Esophagus muscularis mucosa (tissue), 4 donors: ENCODE measurements at regions of chr19 and their contacts with region 1.

Region 1: DNA sequence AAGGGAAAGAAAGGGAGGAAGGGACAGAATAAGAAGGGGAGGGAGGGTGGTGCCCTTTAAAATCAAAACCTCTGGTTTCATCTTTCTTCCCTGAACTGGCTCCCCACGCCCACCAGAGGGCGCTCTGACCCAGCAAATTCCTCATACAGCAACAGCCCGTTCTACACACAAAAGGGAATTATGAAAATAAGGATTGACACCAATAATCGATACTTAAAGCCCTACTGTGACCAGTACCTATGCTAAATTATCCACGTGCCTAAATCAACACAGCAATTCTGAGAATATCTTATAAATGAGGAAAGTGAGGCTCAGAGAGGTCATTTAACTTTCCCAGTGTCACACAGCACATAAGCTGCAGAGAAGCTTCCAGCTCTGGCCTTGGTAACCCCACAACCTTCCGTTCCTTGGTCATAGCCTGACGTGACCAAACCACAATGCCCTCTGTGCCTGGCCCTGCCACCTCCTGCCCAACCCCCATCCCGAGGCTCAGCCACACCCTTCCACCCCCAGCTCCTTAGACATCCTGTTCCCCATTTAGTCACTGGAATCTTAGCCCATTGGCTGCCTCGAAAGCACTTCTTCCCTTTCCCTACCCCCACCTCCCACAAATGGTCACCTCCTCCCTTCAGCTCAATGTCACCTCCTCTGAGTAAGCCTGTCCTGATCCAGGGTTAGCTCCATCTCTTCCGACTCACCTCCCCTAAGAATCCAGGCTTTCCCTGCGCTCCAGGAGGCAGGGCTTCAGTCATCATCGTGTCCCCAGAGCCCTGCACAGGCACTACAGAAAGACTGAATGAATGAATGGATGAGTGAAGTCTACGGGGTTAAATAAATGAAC is 34.2 kb upstream of the PNMA8B start:
- DNase-seq: no peak
- H3K4me3 ChIP-seq: no peak overlapping the region
- H3K27ac ChIP-seq: no peak overlapping the region
- H3K4me1 ChIP-seq: peaks cover 0 to 15% (median 14%) of the 10 kb centered on the region in 4 donors
- H3K27me3 ChIP-seq: peaks cover 0 to 38% (median 4%) of the 10 kb centered on the region in 4 donors
- CTCF ChIP-seq: peak; percentile 91 to 94 (median 92)
- EP300 ChIP-seq: no peak
- POLR2A ChIP-seq: no peak

Region 2: GRCh38 chr19:46404055-46404752 is 125.6 kb before region 1 on chr19:
- intact Hi-C with region 1: no loop called
- DNase-seq: no peak
- H3K4me3 ChIP-seq: peak overlapping the region; percentile 36 to 50 (median 42)
- H3K27ac ChIP-seq: peak overlapping the region; percentile 41 to 66 (median 53)
- H3K4me1 ChIP-seq: peaks cover 12 to 48% (median 38%) of the 10 kb centered on the region in 4 donors
- H3K27me3 ChIP-seq: peaks cover 2 to 94% (median 29%) of the 10 kb centered on the region in 4 donors
- CTCF ChIP-seq: no peak
- EP300 ChIP-seq: no peak
- POLR2A ChIP-seq: no peak

Region 3: GRCh38 chr19:46542428-46543230 is 12.8 kb after region 1 on chr19:
- intact Hi-C with region 1: loop called (anchors 2 kb)
- DNase-seq: peak; percentile 99
- H3K4me3 ChIP-seq: no peak overlapping the region
- H3K27ac ChIP-seq: no peak overlapping the region
- H3K4me1 ChIP-seq: peaks cover 0 to 7% (median 0%) of the 10 kb centered on the region in 4 donors
- H3K27me3 ChIP-seq: no peaks in the 10 kb centered on the region
- CTCF ChIP-seq: peak; percentile 91 to 97 (median 95)
- EP300 ChIP-seq: no peak
- POLR2A ChIP-seq: no peak

Region 4: GRCh38 chr19:46564701-46565100 is 34.9 kb after region 1 on chr19:
- intact Hi-C with region 1: no loop called
- DNase-seq: no peak
- H3K4me3 ChIP-seq: no peak overlapping the region
- H3K27ac ChIP-seq: no peak overlapping the region
- H3K4me1 ChIP-seq: no peaks in the 10 kb centered on the region
- H3K27me3 ChIP-seq: no peaks in the 10 kb centered on the region
- CTCF ChIP-seq: no peak
- EP300 ChIP-seq: no peak
- POLR2A ChIP-seq: no peak